ENCODE measurements at regions of chr6 and their contacts with region 1.

Region 1: GRCh38 chr6:170279977-170280688 is 10.7 kb downstream of the DLL1 start:
- DNase-seq: peak; percentile 75 to 90
- H3K4me3 ChIP-seq: peak overlapping the region; percentile 7 to 36 (median 29)
- H3K27ac ChIP-seq: peak overlapping the region; percentile 68 to 85 (median 75)
- H3K4me1 ChIP-seq: peaks cover 8 to 31% (median 16%) of the 10 kb centered on the region in 4 donors
- H3K27me3 ChIP-seq: peaks cover 0 to 9% (median 0%) of the 10 kb centered on the region in 3 donors
- CTCF ChIP-seq: no peak
- EP300 ChIP-seq: no peak
- POLR2A ChIP-seq: no peak

Region 2: GRCh38 chr6:169831450-169832246 is 448.5 kb before region 1 on chr6:
- intact Hi-C with region 1: loop called (anchors 10 kb)
- DNase-seq: peak; percentile 85 to 93
- H3K4me3 ChIP-seq: peak overlapping the region in 1 of 4 donors; percentile 19
- H3K27ac ChIP-seq: peak overlapping the region; percentile 16 to 62 (median 56)
- H3K4me1 ChIP-seq: peaks cover 7 to 19% (median 11%) of the 10 kb centered on the region in 4 donors
- H3K27me3 ChIP-seq: peaks cover 0 to 21% (median 0%) of the 10 kb centered on the region in 3 donors
- CTCF ChIP-seq: peak in 5 of 7 experiments; percentile 83 to 97 (median 96)
- EP300 ChIP-seq: no peak
- POLR2A ChIP-seq: no peak

Region 3: DNA sequence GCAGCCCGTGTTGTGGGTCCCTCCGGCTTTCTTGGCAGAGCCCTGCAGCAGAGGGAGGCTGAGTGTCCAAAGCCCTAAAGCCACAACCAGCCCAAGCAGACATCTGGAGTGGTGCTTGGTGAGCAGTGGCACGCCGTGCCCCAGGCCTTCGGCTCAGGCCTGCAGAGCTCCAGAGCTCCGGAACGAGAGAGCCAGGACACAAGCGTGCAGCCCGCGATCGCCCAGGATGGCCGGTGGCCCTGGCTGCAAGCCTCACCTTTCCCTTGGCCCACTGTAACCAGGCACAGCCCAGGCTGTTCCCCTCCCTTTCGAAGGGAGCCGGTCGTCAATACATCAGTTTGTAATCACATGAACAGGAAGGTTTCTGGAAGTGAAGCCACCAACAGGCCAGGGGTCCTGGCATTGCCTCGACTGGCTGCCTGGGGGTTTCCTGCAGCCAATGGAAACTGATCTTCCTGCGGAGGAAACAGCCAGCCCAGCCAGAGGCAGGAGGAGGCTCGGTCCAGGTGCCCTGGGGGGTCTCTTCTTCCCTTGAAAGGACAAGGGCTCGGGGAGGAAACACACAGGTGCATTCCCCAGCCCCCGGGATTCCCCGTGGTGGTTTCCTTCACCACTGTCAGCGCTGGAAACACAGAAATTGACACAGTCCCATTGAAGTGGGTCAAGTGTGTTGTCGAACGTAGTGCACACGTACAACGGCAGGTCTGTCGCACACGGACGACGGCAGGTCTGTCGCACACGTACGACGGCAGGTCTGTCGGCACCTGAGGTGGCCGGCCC is 70.4 kb before region 1 on chr6:
- intact Hi-C with region 1: no loop called
- DNase-seq: peak in 1 of 2 donors; percentile 18
- H3K4me3 ChIP-seq: no peak overlapping the region
- H3K27ac ChIP-seq: no peak overlapping the region
- H3K4me1 ChIP-seq: no peaks in the 10 kb centered on the region
- H3K27me3 ChIP-seq: peaks cover 0 to 33% (median 5%) of the 10 kb centered on the region in 3 donors
- CTCF ChIP-seq: no peak
- EP300 ChIP-seq: no peak
- POLR2A ChIP-seq: no peak

Measured in stomach (tissue), 19 donors.